GM10248 (cell line): ENCODE measurements at regions of chr2 and their contacts with region 1.

Region 1: DNA sequence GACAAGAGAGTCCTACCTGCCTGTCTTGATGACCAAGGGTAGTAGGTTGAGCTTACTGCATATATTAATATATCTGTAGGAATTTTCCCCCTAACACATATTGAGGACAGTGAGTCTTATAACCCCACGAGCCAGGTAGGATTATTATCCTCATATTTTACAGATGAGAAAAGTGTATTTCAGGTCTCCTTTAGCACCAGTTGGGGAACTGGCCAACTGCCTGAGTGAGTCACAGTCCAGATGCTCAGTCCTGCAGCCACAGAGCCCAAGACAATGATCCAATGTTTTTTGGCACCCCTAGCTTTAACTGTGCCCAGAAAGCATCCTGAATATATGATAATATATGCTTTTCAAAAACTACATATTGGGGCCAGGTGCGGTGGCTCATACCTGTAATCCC is 30.8 kb upstream of the GLS start:
- DNase-seq: no peak
- CTCF ChIP-seq: no peak

Region 2: GRCh38 chr2:190781604-190782198 is 68.1 kb before region 1 on chr2:
- CTCF ChIA-PET with region 1: interaction called, 10 read pairs
- POLR2A ChIA-PET with region 1: no interaction called
- DNase-seq: peak; percentile 56
- CTCF ChIP-seq: peak; percentile 44

Region 3: DNA sequence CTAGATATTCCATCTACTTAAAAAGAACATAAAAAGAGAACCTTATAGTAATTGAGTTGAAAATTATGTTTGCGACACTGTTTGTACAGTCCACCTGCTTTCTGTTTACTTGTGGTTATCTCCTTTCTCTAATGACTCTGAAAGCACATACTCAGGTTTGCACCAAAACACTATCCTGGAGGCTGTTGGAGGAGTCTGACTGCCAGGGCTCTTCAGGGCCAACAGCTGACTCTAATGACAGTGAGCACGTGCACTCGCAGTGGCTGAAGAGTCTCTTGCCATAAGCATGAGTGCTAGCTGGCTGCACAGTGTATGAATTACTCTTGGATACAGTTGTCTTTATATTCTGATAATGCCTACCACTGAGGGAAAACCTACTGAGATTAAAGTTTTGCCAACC is 14.2 kb after region 1 on chr2:
- CTCF ChIA-PET with region 1: interaction called, 28 read pairs
- POLR2A ChIA-PET with region 1: no interaction called
- DNase-seq: no peak
- CTCF ChIP-seq: no peak

Region 4: GRCh38 chr2:190875891-190876290 is 26.1 kb after region 1 on chr2:
- CTCF ChIA-PET with region 1: interaction called, 13 read pairs
- POLR2A ChIA-PET with region 1: interaction called, 6 read pairs
- DNase-seq: no peak
- CTCF ChIP-seq: no peak

Region 5: GRCh38 chr2:190887089-190887488 is 37.3 kb after region 1 on chr2:
- CTCF ChIA-PET with region 1: interaction called, 19 read pairs
- POLR2A ChIA-PET with region 1: no interaction called
- DNase-seq: peak; percentile 31
- CTCF ChIP-seq: no peak

Region 6: GRCh38 chr2:190947711-190948251 is 98.0 kb after region 1 on chr2:
- CTCF ChIA-PET with region 1: interaction called, 12 read pairs
- POLR2A ChIA-PET with region 1: no interaction called
- DNase-seq: peak; percentile 14
- CTCF ChIP-seq: peak; percentile 22

Region 7: GRCh38 chr2:191646195-191646902 is 796.6 kb after region 1 on chr2:
- CTCF ChIA-PET with region 1: no interaction called
- POLR2A ChIA-PET with region 1: no interaction called
- DNase-seq: no peak
- CTCF ChIP-seq: no peak